CD8-positive, alpha-beta T cell (primary cell): ENCODE measurements at regions of chr17 and their contacts with region 1.

Region 1: DNA sequence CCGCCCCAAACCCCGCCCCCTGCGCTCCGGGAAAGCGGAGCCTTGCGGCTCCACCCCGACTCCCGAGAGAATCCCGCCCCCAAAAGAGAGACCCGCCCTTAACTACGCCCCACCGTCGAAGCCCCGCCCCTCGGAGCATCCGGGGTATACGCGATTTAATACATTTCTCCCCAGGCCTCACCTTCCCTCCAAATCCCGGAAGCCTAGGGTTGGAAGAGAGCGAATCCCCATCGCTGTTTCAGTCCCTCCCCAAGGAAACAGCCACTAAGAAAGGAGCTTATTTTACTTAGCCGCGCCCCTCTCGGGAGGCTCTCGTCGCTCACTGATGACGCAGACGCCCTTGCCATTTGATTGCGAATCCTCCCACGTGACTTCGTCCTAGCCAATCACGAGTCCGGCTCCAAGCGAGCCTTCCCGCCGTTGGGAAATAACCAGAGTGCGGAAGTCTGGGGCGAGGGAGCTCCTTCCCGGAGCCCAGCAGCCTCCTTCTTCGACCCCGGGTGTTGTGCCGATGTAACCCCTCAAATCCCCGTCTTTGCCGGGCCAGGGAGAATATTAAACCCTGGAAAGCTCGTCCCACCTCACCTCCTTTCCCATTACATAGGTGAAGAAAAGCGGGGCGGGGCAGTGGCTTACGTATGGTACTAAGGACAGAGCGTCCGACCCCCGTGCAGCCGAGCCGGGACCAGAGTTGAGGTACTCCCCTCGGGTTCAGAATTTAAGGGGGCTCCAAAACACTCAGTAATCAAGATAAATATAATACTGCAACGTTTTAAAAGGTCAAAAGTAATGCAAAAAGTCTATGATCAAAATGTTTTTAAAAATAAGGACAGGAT is 462 bp upstream of the FDXR start:
- DNase-seq: peak; percentile 98 to 100 (median 99)
- ATAC-seq: peak; percentile 93
- H3K4me3 ChIP-seq: peak overlapping the region; percentile 75 to 92
- H3K4me3 Mint-ChIP-seq: peak overlapping the region; percentile 96
- H3K27ac ChIP-seq: peak overlapping the region; percentile 78 to 99
- H3K27ac Mint-ChIP-seq: peak overlapping the region; percentile 99
- H3K4me1 ChIP-seq: peaks cover 17% of the 10 kb centered on the region
- H3K4me1 Mint-ChIP-seq: peaks cover 23% of the 10 kb centered on the region
- H3K27me3 ChIP-seq: no peaks in the 10 kb centered on the region
- H3K27me3 Mint-ChIP-seq: no peaks in the 10 kb centered on the region
- CTCF ChIP-seq: no peak

Region 2: DNA sequence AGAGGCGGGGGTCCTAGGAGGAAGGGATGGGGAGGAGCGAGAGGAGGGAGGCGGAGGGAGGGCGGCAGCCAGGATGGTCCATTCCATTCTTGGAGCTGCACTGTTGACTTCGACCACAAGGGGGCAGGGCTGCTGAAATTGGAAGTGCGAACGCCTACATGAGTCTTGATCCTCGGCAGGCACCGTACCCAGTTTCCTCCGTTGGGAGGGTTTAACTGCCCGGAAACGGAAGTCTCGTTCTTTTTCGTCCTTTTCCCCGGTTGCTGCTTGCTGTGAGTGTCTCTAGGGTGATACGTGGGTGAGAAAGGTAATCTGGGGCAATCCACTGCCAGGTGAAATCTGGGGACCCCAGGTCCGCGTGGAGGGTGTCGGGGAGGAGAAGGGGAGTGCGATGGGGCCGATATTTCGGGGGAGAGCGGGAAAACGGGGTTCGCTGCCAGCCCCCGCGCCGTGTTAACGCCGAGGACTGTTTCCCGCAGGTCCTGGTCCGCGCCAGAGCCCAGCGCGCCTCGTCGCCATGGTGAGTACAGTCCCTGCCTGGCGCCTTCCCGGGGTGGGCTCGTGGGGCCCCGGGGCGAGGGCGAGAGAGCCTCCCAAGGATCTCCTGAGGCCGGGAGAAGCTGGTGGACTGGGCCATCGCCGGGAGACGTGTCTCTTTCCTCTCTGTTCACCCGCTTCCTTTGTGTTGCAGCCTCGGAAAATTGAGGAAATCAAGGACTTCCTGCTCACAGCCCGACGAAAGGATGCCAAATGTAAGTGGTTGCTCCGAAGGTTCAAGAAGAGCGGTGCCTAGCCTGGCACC is 669.6 kb before region 1 on chr17 and contains the start of gene RPL38:
- CTCF ChIA-PET with region 1: no interaction called
- POLR2A ChIA-PET with region 1: interaction called, 4 read pairs
- intact Hi-C with region 1: loop called in 1 of 2 experiments (anchors 10 kb)
- DNase-seq: peak; percentile 87 to 98 (median 95)
- ATAC-seq: peak; percentile 93
- H3K4me3 ChIP-seq: peak within 1 kb of the TSS; percentile 96 to 100
- H3K4me3 Mint-ChIP-seq: peak within 1 kb of the TSS; percentile 99
- H3K27ac ChIP-seq: peak within 1 kb of the TSS; percentile 84 to 93
- H3K27ac Mint-ChIP-seq: peak within 1 kb of the TSS; percentile 97
- H3K4me1 ChIP-seq: peaks cover 36% of the 10 kb centered on the region
- H3K4me1 Mint-ChIP-seq: peaks cover 45% of the 10 kb centered on the region
- H3K27me3 ChIP-seq: peaks cover 0 to 7% of the 10 kb centered on the region in 2 experiments
- H3K27me3 Mint-ChIP-seq: peaks cover 12% of the 10 kb centered on the region
- CTCF ChIP-seq: peak; percentile 78
- total RNA-seq, gene RPL38: 2,036 to 2,081 TPM

Region 3: GRCh38 chr17:74671031-74671771 is 202.1 kb before region 1 on chr17:
- CTCF ChIA-PET with region 1: no interaction called
- POLR2A ChIA-PET with region 1: no interaction called
- intact Hi-C with region 1: loop called in 1 of 2 experiments (anchors 5 kb)
- DNase-seq: peak; percentile 51 to 84 (median 75)
- ATAC-seq: peak; percentile 97
- H3K4me3 ChIP-seq: no peak overlapping the region
- H3K4me3 Mint-ChIP-seq: no peak overlapping the region
- H3K27ac ChIP-seq: no peak overlapping the region
- H3K27ac Mint-ChIP-seq: no peak overlapping the region
- H3K4me1 ChIP-seq: no peaks in the 10 kb centered on the region
- H3K4me1 Mint-ChIP-seq: no peaks in the 10 kb centered on the region
- H3K27me3 ChIP-seq: peaks cover 2 to 15% of the 10 kb centered on the region in 2 experiments
- H3K27me3 Mint-ChIP-seq: peaks cover 51% of the 10 kb centered on the region
- CTCF ChIP-seq: no peak

Region 4: DNA sequence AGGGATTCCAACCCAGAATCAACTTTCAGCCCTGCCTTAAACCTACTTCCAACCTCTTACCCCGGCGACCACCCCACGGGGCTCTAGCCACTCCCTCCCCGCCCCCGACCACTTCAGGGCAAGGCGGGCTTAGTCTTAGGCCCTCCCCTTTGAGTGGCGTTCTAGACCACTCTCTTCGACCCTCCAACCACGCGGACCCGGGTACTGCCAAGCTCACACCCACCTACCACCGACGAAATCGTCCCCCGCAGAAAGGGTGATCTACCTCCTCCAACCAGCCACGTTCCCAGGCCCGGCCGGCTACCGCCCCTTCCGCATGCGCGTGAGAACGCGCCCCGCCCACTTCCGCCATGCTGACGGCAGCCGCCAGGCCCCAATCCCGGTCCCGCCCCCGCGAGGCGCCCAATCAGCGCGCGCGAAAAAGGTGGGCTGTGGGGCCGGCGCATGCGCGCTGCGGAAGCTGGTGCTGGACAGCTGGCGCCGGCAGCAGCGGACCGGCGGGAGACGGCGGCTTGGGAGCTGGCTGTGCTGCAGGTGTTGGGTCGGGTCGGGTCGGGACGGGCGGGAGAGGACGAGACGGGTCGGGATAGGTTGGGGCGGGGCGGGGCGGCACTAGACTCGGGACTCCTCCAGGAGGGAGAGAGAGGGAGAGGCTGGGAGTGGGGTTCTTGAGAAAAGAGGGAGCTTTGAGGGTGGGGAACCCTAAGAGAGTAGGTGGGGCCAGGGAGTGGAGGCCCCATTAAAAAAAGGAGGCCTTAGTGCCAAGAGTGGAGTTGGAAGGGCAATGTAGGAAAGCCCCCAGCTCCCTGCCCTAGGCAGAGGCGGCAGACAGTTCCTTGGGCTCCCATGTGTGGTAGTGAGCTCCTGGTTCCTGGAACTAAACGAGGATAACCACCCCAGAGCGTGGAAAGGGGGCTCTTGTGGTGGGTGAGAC is 96.9 kb before region 1 on chr17 and contains the start of gene NAT9:
- CTCF ChIA-PET with region 1: no interaction called
- POLR2A ChIA-PET with region 1: interaction called, 5 read pairs
- intact Hi-C with region 1: loop called in 1 of 2 experiments (anchors 1 kb)
- DNase-seq: peak; percentile 97 to 100 (median 99)
- ATAC-seq: peak; percentile 74
- H3K4me3 ChIP-seq: peak within 1 kb of the TSS; percentile 68 to 83
- H3K4me3 Mint-ChIP-seq: peak within 1 kb of the TSS; percentile 99
- H3K27ac ChIP-seq: peak within 1 kb of the TSS; percentile 56 to 76
- H3K27ac Mint-ChIP-seq: peak within 1 kb of the TSS; percentile 97
- H3K4me1 ChIP-seq: peaks cover 47% of the 10 kb centered on the region
- H3K4me1 Mint-ChIP-seq: peaks cover 62% of the 10 kb centered on the region
- H3K27me3 ChIP-seq: no peaks in the 10 kb centered on the region
- H3K27me3 Mint-ChIP-seq: no peaks in the 10 kb centered on the region
- CTCF ChIP-seq: no peak
- total RNA-seq, gene NAT9: 37.9 to 41.1 TPM

Region 5: GRCh38 chr17:75046582-75047289 is 173.5 kb after region 1 on chr17 and contains the starts of genes ATP5PD and KCTD2:
- CTCF ChIA-PET with region 1: no interaction called
- POLR2A ChIA-PET with region 1: no interaction called
- intact Hi-C with region 1: loop called in 1 of 2 experiments (anchors 1 kb)
- DNase-seq: peak; percentile 81 to 97 (median 93)
- ATAC-seq: peak; percentile 91
- H3K4me3 ChIP-seq: peak within 1 kb of the TSS; percentile 99
- H3K4me3 Mint-ChIP-seq: peak within 1 kb of the TSS; percentile 99
- H3K27ac ChIP-seq: peak within 1 kb of the TSS; percentile 93 to 97
- H3K27ac Mint-ChIP-seq: peak within 1 kb of the TSS; percentile 98
- H3K4me1 ChIP-seq: peaks cover 21% of the 10 kb centered on the region
- H3K4me1 Mint-ChIP-seq: peaks cover 54% of the 10 kb centered on the region
- H3K27me3 ChIP-seq: no peaks in the 10 kb centered on the region
- H3K27me3 Mint-ChIP-seq: no peaks in the 10 kb centered on the region
- CTCF ChIP-seq: no peak
- total RNA-seq, gene ATP5PD: 69.9 to 71.6 TPM
- total RNA-seq, gene KCTD2: 29.4 to 31.7 TPM

Region 6: GRCh38 chr17:75667021-75667790 is 794.0 kb after region 1 on chr17 and contains the starts of genes RECQL5 and SAP30BP:
- CTCF ChIA-PET with region 1: no interaction called
- POLR2A ChIA-PET with region 1: no interaction called
- intact Hi-C with region 1: loop called in 1 of 2 experiments (anchors 5 kb)
- DNase-seq: peak; percentile 95 to 99 (median 98)
- ATAC-seq: peak; percentile 100
- H3K4me3 ChIP-seq: peak within 1 kb of the TSS; percentile 78 to 85
- H3K4me3 Mint-ChIP-seq: peak within 1 kb of the TSS; percentile 58
- H3K27ac ChIP-seq: peak within 1 kb of the TSS; percentile 88 to 96
- H3K27ac Mint-ChIP-seq: no peak within 1 kb of the TSS
- H3K4me1 ChIP-seq: peaks cover 18% of the 10 kb centered on the region
- H3K4me1 Mint-ChIP-seq: peaks cover 33% of the 10 kb centered on the region
- H3K27me3 ChIP-seq: no peaks in the 10 kb centered on the region
- H3K27me3 Mint-ChIP-seq: no peaks in the 10 kb centered on the region
- CTCF ChIP-seq: no peak
- total RNA-seq, gene RECQL5: 11.2 to 13.2 TPM
- total RNA-seq, gene SAP30BP: 303 to 305 TPM